BJ (cell line): ENCODE measurements at regions of chr1 and their contacts with region 1.

Region 1: DNA sequence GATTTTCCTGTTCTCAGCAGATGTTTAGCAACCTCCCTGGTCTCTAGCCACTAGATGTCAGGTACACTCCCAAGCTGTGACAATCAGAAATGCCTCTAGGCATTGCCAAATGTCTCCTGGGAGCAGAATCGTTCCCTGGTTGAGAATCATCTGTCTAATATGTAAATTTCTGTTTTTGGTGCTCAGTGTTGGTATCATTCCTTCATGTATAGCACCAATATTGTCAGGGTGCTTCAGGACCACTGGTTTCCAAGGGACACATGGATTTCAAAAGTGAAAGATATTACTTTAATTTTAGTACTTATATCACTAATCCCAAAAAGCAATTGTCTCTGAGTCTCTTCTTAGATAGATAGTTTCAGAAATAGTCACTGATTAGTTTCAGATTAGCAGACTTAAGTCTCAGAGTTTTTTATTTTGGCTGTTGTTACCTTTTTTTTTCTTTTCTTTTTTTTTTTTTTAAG is 160.1 kb downstream of the PTPRC start:
- DNase-seq: no peak
- H3K4me3 ChIP-seq: no peak overlapping the region
- H3K27me3 ChIP-seq: no peaks in the 10 kb centered on the region
- CTCF ChIP-seq: no peak

Region 2: DNA sequence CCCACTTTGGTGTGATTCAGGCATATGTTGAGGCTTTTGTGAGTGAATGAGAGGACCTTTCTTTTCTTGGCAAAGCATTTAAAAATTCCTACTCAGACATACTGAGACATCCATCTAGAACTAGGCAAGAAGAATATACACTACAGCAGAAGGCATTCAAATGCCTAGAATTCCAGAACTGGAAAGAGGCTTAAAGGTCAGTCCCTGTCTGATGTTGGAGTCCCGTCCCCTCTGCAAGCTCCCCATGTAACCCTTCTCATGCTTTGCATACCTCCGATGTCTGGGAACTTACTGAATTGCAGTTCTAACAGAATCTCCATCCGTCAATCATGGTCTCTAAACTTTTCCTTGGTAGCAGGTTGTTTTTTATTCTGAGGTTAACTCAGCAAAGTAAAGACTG is 411.4 kb before region 1 on chr1:
- CTCF ChIA-PET with region 1: no interaction called
- POLR2A ChIA-PET with region 1: no interaction called
- DNase-seq: no peak
- H3K4me3 ChIP-seq: no peak overlapping the region
- H3K27me3 ChIP-seq: no peaks in the 10 kb centered on the region
- CTCF ChIP-seq: no peak

Region 3: GRCh38 chr1:198780376-198780775 is 18.6 kb before region 1 on chr1:
- CTCF ChIA-PET with region 1: no interaction called
- POLR2A ChIA-PET with region 1: no interaction called
- DNase-seq: no peak
- H3K4me3 ChIP-seq: no peak overlapping the region
- H3K27me3 ChIP-seq: no peaks in the 10 kb centered on the region
- CTCF ChIP-seq: no peak

Region 4: DNA sequence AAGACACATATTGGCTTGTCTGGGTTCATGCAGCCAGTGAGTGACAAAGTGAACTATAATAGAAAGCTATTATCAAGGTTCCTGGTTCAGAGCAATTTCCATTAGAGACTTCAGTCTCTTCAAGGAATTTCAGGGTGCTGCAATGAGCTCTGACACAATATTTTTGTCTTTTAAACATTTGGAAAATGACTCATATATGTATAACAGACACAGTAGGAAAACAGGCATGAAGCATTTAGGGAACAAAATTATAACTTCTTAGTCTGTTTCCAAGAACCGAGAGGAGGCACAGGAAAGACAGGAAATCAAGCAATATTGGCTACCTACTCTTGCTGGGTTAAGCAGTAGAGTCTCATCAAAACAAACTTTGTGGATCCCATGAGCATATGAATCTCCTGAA is 10.3 kb after region 1 on chr1:
- CTCF ChIA-PET with region 1: interaction called, 10 read pairs
- POLR2A ChIA-PET with region 1: no interaction called
- DNase-seq: peak; percentile 16
- H3K4me3 ChIP-seq: no peak overlapping the region
- H3K27me3 ChIP-seq: no peaks in the 10 kb centered on the region
- CTCF ChIP-seq: no peak

Region 5: GRCh38 chr1:198858033-198858432 is 59.1 kb after region 1 on chr1:
- CTCF ChIA-PET with region 1: no interaction called
- POLR2A ChIA-PET with region 1: no interaction called
- DNase-seq: no peak
- H3K4me3 ChIP-seq: no peak overlapping the region
- H3K27me3 ChIP-seq: no peaks in the 10 kb centered on the region
- CTCF ChIP-seq: no peak